Activated naive CD4-positive, alpha-beta T cell treated with anti-CD3 and anti-CD28 coated beads for 36 hours (primary cell): ENCODE measurements at regions of chr6 and their contacts with region 1.

Region 1: DNA sequence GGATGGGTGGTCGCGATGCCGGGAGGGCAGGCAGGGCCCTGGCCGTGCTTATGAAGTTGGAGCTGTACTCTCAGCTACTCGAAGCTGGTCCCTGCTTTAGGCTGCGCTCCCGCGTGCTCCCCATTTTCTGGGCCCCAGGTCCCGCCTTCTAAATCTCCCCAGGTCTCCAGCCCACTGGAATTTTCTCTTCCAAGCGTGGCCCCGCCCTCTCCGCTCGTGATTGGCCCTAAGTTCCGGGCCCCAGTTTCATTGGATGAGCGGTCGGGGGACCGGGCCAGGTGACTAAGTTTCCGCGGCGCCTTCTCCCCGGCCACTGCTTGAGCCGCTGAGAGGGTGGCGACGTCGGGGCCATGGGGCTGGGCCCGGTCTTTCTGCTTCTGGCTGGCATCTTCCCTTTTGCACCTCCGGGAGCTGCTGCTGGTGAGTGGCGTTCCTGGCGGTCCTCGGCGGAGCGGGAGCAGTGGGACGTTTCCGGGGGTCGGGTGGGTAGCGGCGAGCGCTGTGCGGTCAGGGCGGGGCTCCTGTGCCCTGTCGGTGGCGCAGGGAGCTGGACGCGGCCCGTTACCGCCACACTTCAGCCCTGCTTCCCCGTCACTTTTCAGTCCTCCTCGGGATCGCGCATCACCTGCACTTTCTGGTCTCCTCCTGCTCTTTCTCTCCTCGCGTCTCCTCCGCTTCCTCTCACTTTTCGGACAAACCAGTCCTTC is at the start of gene MICA:
- DNase-seq: peak; percentile 77
- H3K4me3 Mint-ChIP-seq: peak within 1 kb of the TSS; percentile 92
- H3K27ac Mint-ChIP-seq: peak within 1 kb of the TSS; percentile 17
- H3K4me1 Mint-ChIP-seq: peaks cover 62% of the 10 kb centered on the region
- H3K27me3 Mint-ChIP-seq: no peaks in the 10 kb centered on the region
- total RNA-seq, gene MICA: 10.2 to 10.4 TPM

Region 2: GRCh38 chr6:30626484-30627366 is 776.7 kb before region 1 on chr6 and contains the start of gene ATAT1:
- CTCF ChIA-PET with region 1: no interaction called
- intact Hi-C with region 1: no loop called
- DNase-seq: peak; percentile 89
- H3K4me3 Mint-ChIP-seq: peak within 1 kb of the TSS; percentile 96
- H3K27ac Mint-ChIP-seq: peak within 1 kb of the TSS; percentile 93
- H3K4me1 Mint-ChIP-seq: peaks cover 21% of the 10 kb centered on the region
- H3K27me3 Mint-ChIP-seq: no peaks in the 10 kb centered on the region
- total RNA-seq, gene ATAT1: 6.9 to 7.5 TPM

Region 3: DNA sequence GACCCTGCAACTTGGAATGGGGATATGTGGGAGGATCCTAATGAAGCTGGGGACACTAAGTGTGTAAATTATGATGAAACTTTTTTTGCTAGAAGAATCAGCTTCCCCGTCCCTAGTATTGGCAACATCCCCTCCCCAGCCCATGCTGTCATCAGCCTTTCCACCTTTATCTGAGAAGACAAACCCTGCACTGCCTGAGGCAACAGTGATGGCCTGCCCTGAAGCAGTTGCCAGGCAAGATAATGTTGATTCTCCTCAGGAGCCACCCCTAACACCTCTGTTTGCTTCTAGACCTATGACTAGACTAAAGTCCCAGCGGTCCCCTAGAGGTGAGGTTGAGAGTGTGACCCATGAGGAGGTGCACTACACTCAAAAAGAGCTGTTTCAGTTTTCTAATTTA is 27.0 kb after region 1 on chr6:
- CTCF ChIA-PET with region 1: interaction called, 24 read pairs
- intact Hi-C with region 1: no loop called
- DNase-seq: no peak
- H3K4me3 Mint-ChIP-seq: no peak overlapping the region
- H3K27ac Mint-ChIP-seq: no peak overlapping the region
- H3K4me1 Mint-ChIP-seq: no peaks in the 10 kb centered on the region
- H3K27me3 Mint-ChIP-seq: no peaks in the 10 kb centered on the region